ENCODE measurements at regions of chr3 and their contacts with region 1.

Region 1: DNA sequence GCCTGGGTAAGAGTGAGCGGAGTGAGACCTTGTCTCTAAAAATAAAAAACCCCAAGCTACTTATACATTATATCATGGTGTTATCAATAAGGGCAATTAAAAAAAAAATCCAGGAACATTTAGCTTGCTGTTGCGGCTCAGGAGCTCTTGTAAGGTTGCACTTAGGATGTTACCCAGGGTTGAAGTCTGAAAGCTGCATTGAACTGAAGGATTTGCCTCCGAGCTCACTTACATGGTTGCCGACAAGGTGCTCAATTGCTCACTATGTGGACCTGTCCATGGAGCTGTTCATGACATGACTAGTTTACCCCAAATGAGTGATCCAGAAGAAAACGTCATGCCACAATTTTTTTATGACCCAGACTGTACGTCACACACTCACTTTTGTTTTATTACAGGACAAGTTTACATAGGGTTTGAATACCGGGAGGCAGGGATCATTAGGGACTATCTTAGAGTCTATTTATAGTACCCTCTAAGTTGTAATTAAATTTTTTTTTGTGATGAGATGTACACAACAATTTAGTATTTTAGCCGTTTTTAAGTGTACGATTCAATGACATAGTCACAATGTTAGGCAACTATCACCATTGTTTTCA is 21.0 kb upstream of the CLDN11 start:
- DNase-seq: no peak
- H3K4me3 Mint-ChIP-seq: no peak overlapping the region
- H3K27ac Mint-ChIP-seq: no peak overlapping the region
- H3K4me1 Mint-ChIP-seq: peaks cover 14% of the 10 kb centered on the region
- H3K27me3 Mint-ChIP-seq: no peaks in the 10 kb centered on the region
- CTCF ChIP-seq: no peak

Region 2: DNA sequence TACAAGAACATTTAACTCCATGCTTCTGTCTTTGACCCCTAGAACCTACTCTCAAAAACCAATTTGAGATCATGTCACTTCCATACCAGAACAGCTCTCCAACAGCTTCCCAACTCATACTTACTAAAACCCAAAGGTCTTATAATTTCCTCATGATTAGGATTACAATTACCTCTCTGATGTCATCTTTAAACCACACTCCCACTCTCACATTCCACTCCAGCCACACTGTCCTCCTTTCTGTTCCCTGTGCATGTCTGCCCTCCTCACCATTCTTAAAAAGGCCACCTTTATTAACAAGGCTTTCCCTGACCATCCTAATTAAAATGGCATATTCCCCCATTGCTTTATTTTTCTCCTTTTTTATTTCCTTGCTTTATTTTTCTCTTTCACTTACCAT is 235.0 kb before region 1 on chr3:
- CTCF ChIA-PET with region 1: no interaction called
- intact Hi-C with region 1: loop called (anchors 10 kb)
- DNase-seq: no peak
- H3K4me3 Mint-ChIP-seq: no peak overlapping the region
- H3K27ac Mint-ChIP-seq: no peak overlapping the region
- H3K4me1 Mint-ChIP-seq: peaks cover 20% of the 10 kb centered on the region
- H3K27me3 Mint-ChIP-seq: no peaks in the 10 kb centered on the region
- CTCF ChIP-seq: no peak

Region 3: GRCh38 chr3:170572665-170573253 is 175.1 kb after region 1 on chr3:
- CTCF ChIA-PET with region 1: no interaction called
- intact Hi-C with region 1: no loop called
- DNase-seq: peak; percentile 26
- H3K4me3 Mint-ChIP-seq: no peak overlapping the region
- H3K27ac Mint-ChIP-seq: peak overlapping the region; percentile 1
- H3K4me1 Mint-ChIP-seq: peaks cover 15% of the 10 kb centered on the region
- H3K27me3 Mint-ChIP-seq: peaks cover 25% of the 10 kb centered on the region
- CTCF ChIP-seq: no peak

Measured in Calu3 (cell line).